ENCODE measurements at regions of chr7 and their contacts with region 1.

Region 1: GRCh38 chr7:50266635-50267386 is 37.7 kb upstream of the IKZF1 start:
- DNase-seq: peak; percentile 79 to 89 (median 83)
- H3K4me3 ChIP-seq: peak overlapping the region in 1 of 2 donors; percentile 16
- H3K4me3 Mint-ChIP-seq: peak overlapping the region; percentile 61 to 93 (median 82)
- H3K27ac ChIP-seq: peak overlapping the region; percentile 49
- H3K27ac Mint-ChIP-seq: peak overlapping the region; percentile 91 to 97 (median 96)
- H3K4me1 ChIP-seq: peaks cover 100% of the 10 kb centered on the region
- H3K4me1 Mint-ChIP-seq: peaks cover 86 to 100% (median 93%) of the 10 kb centered on the region in 4 donors
- H3K27me3 ChIP-seq: no peaks in the 10 kb centered on the region
- H3K27me3 Mint-ChIP-seq: no peaks in the 10 kb centered on the region

Region 2: DNA sequence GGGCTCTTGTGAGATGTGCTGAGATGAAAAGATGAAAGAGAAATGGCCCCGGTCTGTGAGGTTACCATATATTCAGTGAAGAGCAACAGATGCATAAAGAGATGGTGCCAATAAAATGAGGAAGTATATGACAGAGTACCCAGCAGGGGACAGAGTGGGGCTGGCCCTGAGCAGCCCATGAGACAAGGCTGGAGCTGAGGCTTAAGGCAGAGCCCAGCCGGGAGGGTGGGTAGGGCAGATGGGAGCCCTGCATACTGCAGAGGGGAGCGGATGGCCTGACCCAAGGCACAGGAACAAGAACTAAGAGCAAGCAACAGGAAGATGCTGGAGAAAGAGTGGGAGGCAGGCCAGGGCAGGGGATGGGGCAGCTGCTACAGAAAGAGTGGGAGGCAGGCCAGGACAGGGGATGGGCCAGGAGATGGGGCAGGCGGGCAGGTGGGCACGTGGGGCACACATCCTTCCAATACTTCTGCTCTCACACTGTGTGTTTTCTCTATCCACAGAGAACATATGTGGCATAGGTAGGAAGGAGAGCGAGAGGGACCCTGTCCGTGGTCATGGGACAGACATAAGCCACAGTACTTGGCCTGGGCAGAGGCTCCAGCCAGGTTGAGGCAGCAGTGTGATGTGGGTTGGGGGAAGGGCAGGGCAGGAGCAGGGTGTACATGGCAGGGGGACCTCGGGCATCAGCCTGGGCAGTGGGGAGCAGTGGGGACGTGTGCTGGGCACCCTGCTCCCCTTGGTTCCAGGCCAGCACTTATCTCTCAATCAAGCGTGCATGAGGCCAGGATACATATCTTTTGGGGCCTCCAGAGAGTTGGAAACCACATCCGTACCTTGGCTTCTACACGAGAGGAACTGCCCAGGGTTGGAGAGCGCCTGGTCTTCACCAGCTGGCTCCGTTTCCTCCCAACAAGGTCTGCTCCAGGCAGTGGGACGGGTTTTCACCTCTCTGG is 53.9 kb before region 1 on chr7:
- CTCF ChIA-PET with region 1: interaction called, 134 read pairs
- POLR2A ChIA-PET with region 1: interaction called, 64 read pairs
- intact Hi-C with region 1: no loop called
- DNase-seq: peak in 1 of 5 donors; percentile 36
- H3K4me3 ChIP-seq: no peak overlapping the region
- H3K4me3 Mint-ChIP-seq: peak overlapping the region in 7 of 8 donors; percentile 29 to 81 (median 72)
- H3K27ac ChIP-seq: no peak overlapping the region
- H3K27ac Mint-ChIP-seq: peak overlapping the region; percentile 16 to 94 (median 60)
- H3K4me1 ChIP-seq: peaks cover 89% of the 10 kb centered on the region
- H3K4me1 Mint-ChIP-seq: peaks cover 63 to 99% (median 83%) of the 10 kb centered on the region in 4 donors
- H3K27me3 ChIP-seq: no peaks in the 10 kb centered on the region
- H3K27me3 Mint-ChIP-seq: no peaks in the 10 kb centered on the region

Region 3: DNA sequence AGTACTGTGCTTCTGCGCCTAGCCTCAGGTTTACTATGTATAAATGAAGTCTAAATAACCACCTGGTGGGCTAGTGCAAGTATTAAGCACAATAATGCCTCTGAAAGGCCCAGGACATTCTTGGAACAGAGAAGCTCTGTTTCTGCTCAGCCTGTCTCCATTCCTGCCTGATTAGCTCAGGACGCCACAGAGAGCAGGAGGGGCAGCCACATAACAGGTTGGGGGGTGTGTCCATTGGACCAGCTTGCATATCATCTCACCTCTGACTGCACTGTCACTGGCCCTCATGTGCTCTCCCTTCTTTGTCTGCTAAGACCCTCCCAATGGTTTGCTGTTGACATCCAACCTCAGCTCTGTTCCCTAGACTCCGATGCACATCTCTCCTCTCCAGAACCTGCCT is 15.0 kb before region 1 on chr7:
- CTCF ChIA-PET with region 1: interaction called, 4 read pairs
- POLR2A ChIA-PET with region 1: interaction called, 38 read pairs
- intact Hi-C with region 1: no loop called
- DNase-seq: no peak
- H3K4me3 ChIP-seq: no peak overlapping the region
- H3K4me3 Mint-ChIP-seq: no peak overlapping the region
- H3K27ac ChIP-seq: no peak overlapping the region
- H3K27ac Mint-ChIP-seq: peak overlapping the region in 1 of 7 donors; percentile 53
- H3K4me1 ChIP-seq: peaks cover 17% of the 10 kb centered on the region
- H3K4me1 Mint-ChIP-seq: peaks cover 23 to 33% (median 30%) of the 10 kb centered on the region in 4 donors
- H3K27me3 ChIP-seq: no peaks in the 10 kb centered on the region
- H3K27me3 Mint-ChIP-seq: no peaks in the 10 kb centered on the region

Region 4: GRCh38 chr7:50304158-50304910 is 37.5 kb after region 1 on chr7 and contains the start of gene IKZF1:
- CTCF ChIA-PET with region 1: interaction called, 25 read pairs
- POLR2A ChIA-PET with region 1: interaction called, 575 read pairs
- intact Hi-C with region 1: loop called (anchors 1 kb)
- DNase-seq: peak; percentile 53 to 66 (median 61)
- H3K4me3 ChIP-seq: peak within 1 kb of the TSS; percentile 86 to 96
- H3K4me3 Mint-ChIP-seq: peak within 1 kb of the TSS; percentile 97 to 100 (median 100)
- H3K27ac ChIP-seq: peak within 1 kb of the TSS; percentile 90
- H3K27ac Mint-ChIP-seq: peak within 1 kb of the TSS; percentile 90 to 99 (median 96)
- H3K4me1 ChIP-seq: peaks cover 53% of the 10 kb centered on the region
- H3K4me1 Mint-ChIP-seq: peaks cover 33 to 71% (median 47%) of the 10 kb centered on the region in 4 donors
- H3K27me3 ChIP-seq: no peaks in the 10 kb centered on the region
- H3K27me3 Mint-ChIP-seq: no peaks in the 10 kb centered on the region
- total RNA-seq, gene IKZF1: 474 to 479 TPM

Region 5: GRCh38 chr7:50342616-50343114 is 75.9 kb after region 1 on chr7:
- CTCF ChIA-PET with region 1: interaction called, 5 read pairs
- POLR2A ChIA-PET with region 1: interaction called, 18 read pairs
- intact Hi-C with region 1: no loop called
- DNase-seq: peak; percentile 62 to 88 (median 63)
- H3K4me3 ChIP-seq: peak overlapping the region in 1 of 2 donors; percentile 36
- H3K4me3 Mint-ChIP-seq: peak overlapping the region; percentile 76 to 88 (median 82)
- H3K27ac ChIP-seq: peak overlapping the region; percentile 96
- H3K27ac Mint-ChIP-seq: peak overlapping the region in 4 of 7 donors; percentile 90 to 98 (median 96)
- H3K4me1 ChIP-seq: peaks cover 99% of the 10 kb centered on the region
- H3K4me1 Mint-ChIP-seq: peaks cover 27 to 83% (median 55%) of the 10 kb centered on the region in 4 donors
- H3K27me3 ChIP-seq: no peaks in the 10 kb centered on the region
- H3K27me3 Mint-ChIP-seq: no peaks in the 10 kb centered on the region

Region 6: GRCh38 chr7:50418086-50418515 is 151.3 kb after region 1 on chr7:
- CTCF ChIA-PET with region 1: interaction called, 17 read pairs
- POLR2A ChIA-PET with region 1: interaction called, 3 read pairs
- intact Hi-C with region 1: no loop called
- DNase-seq: peak; percentile 59 to 71 (median 63)
- H3K4me3 ChIP-seq: no peak overlapping the region
- H3K4me3 Mint-ChIP-seq: no peak overlapping the region
- H3K27ac ChIP-seq: no peak overlapping the region
- H3K27ac Mint-ChIP-seq: peak overlapping the region in 1 of 7 donors; percentile 62
- H3K4me1 ChIP-seq: peaks cover 16% of the 10 kb centered on the region
- H3K4me1 Mint-ChIP-seq: peaks cover 12 to 23% (median 16%) of the 10 kb centered on the region in 4 donors
- H3K27me3 ChIP-seq: no peaks in the 10 kb centered on the region
- H3K27me3 Mint-ChIP-seq: no peaks in the 10 kb centered on the region

Region 7: DNA sequence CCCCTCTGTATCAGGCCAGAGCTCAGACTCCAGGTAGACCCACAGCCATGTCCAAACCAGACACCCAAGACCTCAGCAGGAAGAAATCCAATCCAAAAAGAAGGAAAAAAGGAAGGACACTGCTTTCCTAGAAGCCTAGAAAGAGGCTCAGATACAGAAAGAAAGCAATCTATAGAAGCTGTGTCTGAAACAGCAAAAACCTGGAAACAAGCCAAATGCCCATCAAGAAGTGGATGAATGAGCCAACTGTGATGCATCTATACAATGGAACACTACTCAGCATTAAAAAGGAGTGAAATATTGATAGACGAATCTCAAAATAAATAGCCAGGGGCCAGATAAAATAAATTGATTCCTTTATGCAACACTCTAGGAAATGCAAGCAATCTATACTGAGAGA is 484.3 kb after region 1 on chr7:
- CTCF ChIA-PET with region 1: no interaction called
- POLR2A ChIA-PET with region 1: no interaction called
- intact Hi-C with region 1: no loop called
- DNase-seq: no peak
- H3K4me3 ChIP-seq: no peak overlapping the region
- H3K4me3 Mint-ChIP-seq: no peak overlapping the region
- H3K27ac ChIP-seq: no peak overlapping the region
- H3K27ac Mint-ChIP-seq: no peak overlapping the region
- H3K4me1 ChIP-seq: no peaks in the 10 kb centered on the region
- H3K4me1 Mint-ChIP-seq: peaks cover 8 to 12% (median 9%) of the 10 kb centered on the region in 4 donors
- H3K27me3 ChIP-seq: no peaks in the 10 kb centered on the region
- H3K27me3 Mint-ChIP-seq: no peaks in the 10 kb centered on the region